ENCODE measurements at regions of chr9 and their contacts with region 1.

Region 1: DNA sequence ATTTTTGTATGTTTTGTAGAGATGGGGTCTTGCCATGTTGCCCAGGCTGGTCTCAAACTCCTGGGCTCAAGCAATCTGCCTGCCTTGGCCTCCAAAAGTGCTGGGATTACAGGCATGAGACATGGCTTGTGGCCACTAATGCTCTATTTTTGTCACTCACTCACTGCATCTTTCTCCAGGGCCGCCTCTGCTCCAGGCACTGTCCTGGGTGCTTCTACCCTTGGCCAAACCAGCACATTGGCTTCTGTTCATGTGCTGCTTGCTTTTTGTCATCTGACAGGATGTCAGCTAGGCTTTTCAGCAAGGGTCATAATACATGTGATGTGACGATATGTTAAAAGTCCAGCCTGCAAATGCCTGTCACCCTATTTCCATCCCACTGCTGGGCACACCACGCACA is 3.2 kb downstream of the ODF2 start:
- DNase-seq: no peak
- H3K4me3 ChIP-seq: no peak overlapping the region
- H3K27ac ChIP-seq: no peak overlapping the region
- H3K27me3 ChIP-seq: no peaks in the 10 kb centered on the region
- CTCF ChIP-seq: no peak

Region 2: GRCh38 chr9:128473104-128473503 is 14.1 kb after region 1 on chr9:
- CTCF ChIA-PET with region 1: no interaction called
- POLR2A ChIA-PET with region 1: no interaction called
- DNase-seq: no peak
- H3K4me3 ChIP-seq: no peak overlapping the region
- H3K27ac ChIP-seq: no peak overlapping the region
- H3K27me3 ChIP-seq: no peaks in the 10 kb centered on the region
- CTCF ChIP-seq: no peak

Region 3: GRCh38 chr9:128568470-128569078 is 109.6 kb after region 1 on chr9:
- CTCF ChIA-PET with region 1: no interaction called
- POLR2A ChIA-PET with region 1: interaction called, 11 read pairs
- DNase-seq: no peak
- H3K4me3 ChIP-seq: no peak overlapping the region
- H3K27ac ChIP-seq: no peak overlapping the region
- H3K27me3 ChIP-seq: no peaks in the 10 kb centered on the region
- CTCF ChIP-seq: no peak